Activated naive CD4-positive, alpha-beta T cell treated with anti-CD3 and anti-CD28 coated beads, Interleukin-2, amount 10 ng/mL, durations not matched to agents 7 days and 5 days (primary cell): ENCODE measurements at regions of chr3 and their contacts with region 1.

Region 1: DNA sequence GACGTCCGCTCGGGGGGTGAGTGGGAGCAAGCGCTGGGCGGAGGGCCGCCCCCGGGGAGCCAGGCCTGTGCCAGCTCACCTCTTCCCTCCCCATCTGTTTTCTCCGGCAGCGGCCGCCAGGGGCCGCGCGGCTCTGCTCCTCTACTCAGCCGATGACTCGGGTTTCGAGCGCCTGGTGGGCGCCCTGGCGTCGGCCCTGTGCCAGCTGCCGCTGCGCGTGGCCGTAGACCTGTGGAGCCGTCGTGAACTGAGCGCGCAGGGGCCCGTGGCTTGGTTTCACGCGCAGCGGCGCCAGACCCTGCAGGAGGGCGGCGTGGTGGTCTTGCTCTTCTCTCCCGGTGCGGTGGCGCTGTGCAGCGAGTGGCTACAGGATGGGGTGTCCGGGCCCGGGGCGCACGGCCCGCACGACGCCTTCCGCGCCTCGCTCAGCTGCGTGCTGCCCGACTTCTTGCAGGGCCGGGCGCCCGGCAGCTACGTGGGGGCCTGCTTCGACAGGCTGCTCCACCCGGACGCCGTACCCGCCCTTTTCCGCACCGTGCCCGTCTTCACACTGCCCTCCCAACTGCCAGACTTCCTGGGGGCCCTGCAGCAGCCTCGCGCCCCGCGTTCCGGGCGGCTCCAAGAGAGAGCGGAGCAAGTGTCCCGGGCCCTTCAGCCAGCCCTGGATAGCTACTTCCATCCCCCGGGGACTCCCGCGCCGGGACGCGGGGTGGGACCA is 632 bp upstream of the CRELD1 start:
- DNase-seq: peak; percentile 91
- H3K4me3 Mint-ChIP-seq: peak overlapping the region; percentile 97
- H3K27ac Mint-ChIP-seq: peak overlapping the region; percentile 95
- H3K4me1 Mint-ChIP-seq: peaks cover 35% of the 10 kb centered on the region
- H3K27me3 Mint-ChIP-seq: peaks cover 8% of the 10 kb centered on the region

Region 2: DNA sequence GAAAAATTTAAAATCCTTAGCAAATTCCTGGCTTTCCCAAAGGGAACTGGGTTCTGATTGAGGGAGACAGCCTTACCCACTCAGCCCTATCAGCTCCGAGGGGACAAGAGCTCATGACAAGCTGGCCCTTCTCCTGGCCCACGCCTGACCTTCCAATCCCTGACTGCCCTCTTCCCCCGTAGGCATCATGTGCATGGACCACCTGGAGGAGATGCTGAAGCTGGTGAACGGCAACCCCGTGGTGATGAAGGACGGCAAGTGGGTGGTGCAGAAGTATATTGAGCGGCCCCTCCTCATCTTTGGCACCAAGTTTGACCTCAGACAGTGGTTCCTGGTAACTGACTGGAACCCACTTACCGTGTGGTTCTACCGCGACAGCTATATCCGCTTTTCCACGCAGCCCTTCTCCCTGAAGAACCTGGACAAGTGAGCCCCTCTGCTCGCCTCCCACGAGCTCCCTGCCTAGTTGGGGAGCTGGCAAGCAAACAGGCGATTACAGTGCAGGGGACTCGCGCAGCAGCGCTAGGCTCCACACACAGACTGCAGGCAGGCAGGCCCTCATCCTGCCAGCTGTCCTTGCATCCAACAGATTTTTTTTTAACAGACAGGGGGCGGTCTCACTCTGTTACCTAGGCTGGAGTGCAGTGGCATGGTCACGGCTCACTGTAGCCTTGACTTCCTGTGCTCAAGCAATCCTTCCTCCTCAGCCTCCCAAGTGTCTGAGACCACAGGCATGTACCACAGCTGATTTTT is 106.0 kb before region 1 on chr3:
- CTCF ChIA-PET with region 1: interaction called, 18 read pairs
- DNase-seq: peak; percentile 46
- H3K4me3 Mint-ChIP-seq: no peak overlapping the region
- H3K27ac Mint-ChIP-seq: peak overlapping the region; percentile 55
- H3K4me1 Mint-ChIP-seq: peaks cover 3% of the 10 kb centered on the region
- H3K27me3 Mint-ChIP-seq: no peaks in the 10 kb centered on the region

Region 3: DNA sequence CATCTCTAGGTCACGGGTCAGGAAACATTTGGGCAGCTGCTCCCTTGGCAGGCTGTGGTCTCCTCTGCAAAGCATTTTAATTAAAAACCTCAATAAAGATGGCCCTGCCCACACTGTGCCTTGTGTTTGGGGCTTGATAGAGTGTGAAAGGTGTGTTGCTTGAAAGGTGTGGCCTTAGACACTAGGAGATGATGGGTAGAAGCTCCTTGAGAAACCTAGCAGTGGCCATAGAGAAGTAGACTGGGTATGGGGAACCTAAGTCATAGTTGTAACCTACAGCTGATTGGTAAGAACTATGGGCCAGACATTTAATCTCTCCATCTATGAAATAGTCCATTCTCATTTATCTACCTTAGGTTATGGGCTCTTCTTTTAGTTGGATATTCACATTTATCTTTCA is 39.3 kb before region 1 on chr3:
- CTCF ChIA-PET with region 1: interaction called, 14 read pairs
- DNase-seq: no peak
- H3K4me3 Mint-ChIP-seq: no peak overlapping the region
- H3K27ac Mint-ChIP-seq: no peak overlapping the region
- H3K4me1 Mint-ChIP-seq: peaks cover 45% of the 10 kb centered on the region
- H3K27me3 Mint-ChIP-seq: no peaks in the 10 kb centered on the region

Region 4: DNA sequence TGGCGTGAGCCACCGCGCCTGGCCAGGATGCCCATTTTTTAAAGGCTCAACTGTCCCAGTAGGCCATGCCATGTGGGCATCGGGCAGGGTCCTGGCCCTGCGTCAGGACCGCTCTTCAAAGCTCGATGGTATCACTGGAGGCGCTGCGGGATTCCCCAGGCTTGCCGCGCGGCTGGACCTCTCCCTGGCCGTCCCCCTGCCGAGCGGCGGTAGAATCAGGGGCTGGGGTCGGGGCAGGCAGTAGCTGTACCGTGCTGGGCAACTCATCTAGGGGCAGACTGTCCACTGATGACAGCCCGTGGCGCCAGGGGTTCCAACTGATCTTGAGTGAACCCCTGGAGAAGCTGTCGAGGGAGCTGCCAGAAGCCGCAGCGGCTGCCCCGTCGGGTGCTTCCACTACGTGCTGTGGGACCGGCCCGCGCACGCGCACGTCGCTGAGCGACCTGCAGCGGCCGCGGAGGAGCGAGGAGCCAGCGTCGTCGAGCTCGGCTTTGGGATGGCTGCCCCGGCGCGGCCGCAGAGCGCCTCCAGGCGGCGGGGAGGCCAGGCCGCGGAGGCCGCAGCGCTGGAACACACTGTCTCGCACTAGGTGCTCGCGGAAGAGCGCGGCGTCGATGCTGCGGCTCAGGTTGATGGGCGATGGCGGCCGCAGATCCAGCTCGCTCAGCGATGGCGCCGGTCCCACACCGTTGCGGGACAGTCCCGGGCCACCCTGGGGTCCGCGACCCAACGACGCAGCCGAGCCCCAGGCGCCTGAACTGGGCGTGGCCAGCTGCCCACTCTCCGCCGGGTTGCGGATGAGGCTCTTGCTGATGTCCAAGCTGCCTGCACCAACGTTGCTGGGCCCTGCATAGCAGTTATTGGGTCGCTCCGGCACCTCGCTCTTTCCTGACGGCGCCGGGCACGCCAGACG is 13.4 kb after region 1 on chr3:
- CTCF ChIA-PET with region 1: interaction called, 62 read pairs
- DNase-seq: peak; percentile 85
- H3K4me3 Mint-ChIP-seq: peak overlapping the region; percentile 74
- H3K27ac Mint-ChIP-seq: peak overlapping the region; percentile 19
- H3K4me1 Mint-ChIP-seq: peaks cover 17% of the 10 kb centered on the region
- H3K27me3 Mint-ChIP-seq: no peaks in the 10 kb centered on the region

Region 5: GRCh38 chr3:10322352-10322710 is 389.3 kb after region 1 on chr3:
- CTCF ChIA-PET with region 1: interaction called, 24 read pairs
- DNase-seq: peak; percentile 47
- H3K4me3 Mint-ChIP-seq: no peak overlapping the region
- H3K27ac Mint-ChIP-seq: no peak overlapping the region
- H3K4me1 Mint-ChIP-seq: peaks cover 24% of the 10 kb centered on the region
- H3K27me3 Mint-ChIP-seq: peaks cover 18% of the 10 kb centered on the region